CD4-positive, alpha-beta memory T cell (primary cell): ENCODE measurements at regions of chr1 and their contacts with region 1.

Region 1: DNA sequence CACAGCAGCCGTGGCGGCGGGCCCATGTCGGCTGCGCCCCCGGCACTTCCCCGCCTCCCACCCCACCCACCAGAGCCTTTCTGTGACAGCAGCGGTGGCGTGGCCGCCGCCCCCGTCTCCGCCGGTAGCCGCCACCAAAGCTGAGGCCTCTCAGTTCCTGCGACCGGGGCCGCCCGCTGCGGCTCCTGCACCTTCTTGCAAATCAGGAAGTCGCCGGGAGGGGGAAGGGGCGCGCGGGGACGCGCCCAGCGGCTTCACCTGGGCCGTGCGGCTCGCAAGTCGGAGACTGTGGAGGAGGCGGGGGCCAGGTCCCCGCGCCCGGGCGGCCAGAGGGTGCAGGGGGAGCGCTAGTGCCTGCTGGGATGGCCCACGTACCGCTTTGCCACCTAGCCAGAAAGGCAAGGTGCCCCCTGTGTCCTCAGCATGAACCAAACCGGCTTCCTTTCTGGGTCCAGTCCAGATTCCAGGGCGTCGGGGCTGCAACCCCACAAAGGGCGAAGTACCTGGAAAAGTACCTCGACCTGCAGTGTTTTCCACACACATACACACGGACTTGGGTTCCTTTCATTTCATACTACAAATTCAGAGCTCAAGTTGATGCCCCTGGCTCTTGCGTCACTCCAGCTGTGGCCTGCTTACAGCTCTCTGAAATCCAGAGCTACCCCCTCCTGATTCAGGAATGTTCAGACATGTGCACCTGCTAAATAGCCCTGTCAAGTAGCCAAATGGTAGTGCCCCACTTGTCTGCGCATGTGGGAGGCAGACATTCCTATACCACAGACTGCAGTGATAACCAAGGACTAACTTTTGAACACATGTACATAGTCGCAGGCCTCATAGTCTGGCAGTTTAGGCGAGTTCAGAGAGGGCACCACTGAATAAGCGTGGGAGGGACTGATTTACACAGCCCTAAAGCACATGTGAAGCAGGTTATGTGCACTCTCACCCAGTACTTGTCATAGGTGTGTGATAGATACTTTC is at the start of gene DENND1B:
- DNase-seq: peak; percentile 82 to 88 (median 83)
- H3K4me3 ChIP-seq: peak within 1 kb of the TSS; percentile 73 to 84
- H3K4me3 Mint-ChIP-seq: peak within 1 kb of the TSS; percentile 87 to 97 (median 92)
- H3K27ac ChIP-seq: peak within 1 kb of the TSS; percentile 68
- H3K27ac Mint-ChIP-seq: peak within 1 kb of the TSS; percentile 94 to 99 (median 98)
- H3K4me1 ChIP-seq: peaks cover 71% of the 10 kb centered on the region
- H3K4me1 Mint-ChIP-seq: peaks cover 56 to 73% (median 65%) of the 10 kb centered on the region in 4 donors
- H3K27me3 ChIP-seq: no peaks in the 10 kb centered on the region
- H3K27me3 Mint-ChIP-seq: no peaks in the 10 kb centered on the region
- total RNA-seq, gene DENND1B: 25.5 to 26.3 TPM

Region 2: DNA sequence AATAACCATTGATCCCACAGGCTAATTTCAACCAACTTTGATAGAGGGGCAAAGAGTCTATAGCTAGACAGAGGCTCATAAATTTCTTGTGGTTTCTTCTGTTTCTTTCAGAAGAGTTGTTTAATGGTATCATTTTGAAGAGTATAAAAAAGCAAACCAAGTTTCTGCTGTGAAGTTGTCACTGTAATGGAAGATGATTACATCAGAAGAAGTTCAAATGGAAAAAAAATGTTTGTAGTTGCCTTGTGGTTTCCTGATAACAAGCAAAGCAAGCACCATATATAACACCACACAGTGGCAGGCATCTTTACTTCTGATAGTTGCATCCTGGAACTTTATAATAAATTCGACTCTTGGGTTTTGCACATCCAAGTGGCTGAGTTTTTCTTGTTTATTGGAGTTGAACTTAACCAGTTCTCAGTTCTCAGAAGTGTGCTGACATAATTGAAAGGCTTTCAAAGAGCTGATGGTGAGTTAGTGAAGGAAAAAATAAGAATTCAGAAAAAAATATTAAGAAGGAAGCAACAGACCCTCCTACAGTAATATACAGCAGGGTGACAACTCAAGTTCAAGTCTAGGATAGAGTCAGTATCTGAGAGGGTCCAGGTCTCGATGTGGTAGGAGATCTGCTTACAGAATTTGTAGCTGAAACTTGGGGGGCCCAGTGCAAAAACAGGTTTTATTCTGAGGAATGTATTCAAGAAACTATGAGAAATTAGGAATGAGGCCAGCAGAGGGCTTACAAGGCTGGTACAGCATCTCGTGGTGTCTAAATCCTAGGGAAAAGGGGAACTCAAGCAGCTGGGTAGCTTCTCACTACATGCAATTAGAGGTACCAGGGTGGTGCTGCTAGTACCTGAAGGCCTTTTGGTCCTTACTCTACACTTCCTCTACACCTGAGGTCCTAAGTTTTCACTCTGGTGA is 384.0 kb before region 1 on chr1:
- CTCF ChIA-PET with region 1: no interaction called
- POLR2A ChIA-PET with region 1: no interaction called
- intact Hi-C with region 1: loop called (anchors 5 kb)
- DNase-seq: peak; percentile 48 to 81 (median 75)
- H3K4me3 ChIP-seq: no peak overlapping the region
- H3K4me3 Mint-ChIP-seq: peak overlapping the region; percentile 2 to 72 (median 49)
- H3K27ac ChIP-seq: peak overlapping the region; percentile 25
- H3K27ac Mint-ChIP-seq: peak overlapping the region; percentile 58 to 96 (median 87)
- H3K4me1 ChIP-seq: peaks cover 43% of the 10 kb centered on the region
- H3K4me1 Mint-ChIP-seq: peaks cover 30 to 42% (median 36%) of the 10 kb centered on the region in 4 donors
- H3K27me3 ChIP-seq: no peaks in the 10 kb centered on the region
- H3K27me3 Mint-ChIP-seq: peaks cover 0 to under 1% of the 10 kb centered on the region in 2 donors

Region 3: GRCh38 chr1:197761621-197762020 is 14.0 kb before region 1 on chr1:
- CTCF ChIA-PET with region 1: interaction called, 6 read pairs
- POLR2A ChIA-PET with region 1: interaction called, 34 read pairs
- intact Hi-C with region 1: no loop called
- DNase-seq: peak in 4 of 5 donors; percentile 4 to 21 (median 12)
- H3K4me3 ChIP-seq: no peak overlapping the region
- H3K4me3 Mint-ChIP-seq: peak overlapping the region in 4 of 8 donors; percentile 17 to 80 (median 60)
- H3K27ac ChIP-seq: no peak overlapping the region
- H3K27ac Mint-ChIP-seq: peak overlapping the region in 1 of 7 donors; percentile 19
- H3K4me1 ChIP-seq: peaks cover 54% of the 10 kb centered on the region
- H3K4me1 Mint-ChIP-seq: peaks cover 40 to 62% (median 48%) of the 10 kb centered on the region in 4 donors
- H3K27me3 ChIP-seq: no peaks in the 10 kb centered on the region
- H3K27me3 Mint-ChIP-seq: no peaks in the 10 kb centered on the region

Region 4: GRCh38 chr1:197902454-197903195 is 127.1 kb after region 1 on chr1 and contains the start of gene C1orf53:
- CTCF ChIA-PET with region 1: no interaction called
- POLR2A ChIA-PET with region 1: interaction called, 8 read pairs
- intact Hi-C with region 1: loop called (anchors 2 kb)
- DNase-seq: peak; percentile 71 to 85 (median 76)
- H3K4me3 ChIP-seq: peak within 1 kb of the TSS; percentile 26 to 75
- H3K4me3 Mint-ChIP-seq: peak within 1 kb of the TSS; percentile 87 to 93 (median 90)
- H3K27ac ChIP-seq: peak within 1 kb of the TSS; percentile 44
- H3K27ac Mint-ChIP-seq: peak within 1 kb of the TSS; percentile 30 to 85 (median 82)
- H3K4me1 ChIP-seq: peaks cover 15% of the 10 kb centered on the region
- H3K4me1 Mint-ChIP-seq: peaks cover 2 to 18% (median 12%) of the 10 kb centered on the region in 4 donors
- H3K27me3 ChIP-seq: peaks cover 43% of the 10 kb centered on the region
- H3K27me3 Mint-ChIP-seq: peaks cover 28 to 48% of the 10 kb centered on the region in 2 donors
- total RNA-seq, gene C1orf53: not detected